ENCODE measurements at regions of chr3 and their contacts with region 1.

Region 1: DNA sequence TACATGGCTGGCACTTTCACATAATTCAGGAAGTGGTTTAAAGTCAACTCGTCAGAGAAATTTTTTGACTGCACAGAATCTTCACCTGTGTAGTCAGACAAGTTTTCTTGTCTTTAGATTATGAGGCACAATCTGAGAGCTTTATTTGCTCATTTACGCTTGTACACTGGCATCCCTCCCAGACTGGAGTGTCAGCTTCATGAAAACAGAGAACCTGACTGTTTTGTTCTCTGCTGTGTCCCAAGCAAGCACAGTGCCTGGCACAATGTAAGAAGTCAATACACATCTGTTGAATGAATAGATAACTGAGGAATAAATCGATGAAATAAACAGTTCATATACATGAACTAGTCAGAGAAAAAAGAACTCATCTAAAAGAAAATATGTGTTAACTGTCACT is 846.1 kb upstream of the CFAP20DC start:
- DNase-seq: no peak
- H3K4me3 ChIP-seq: no peak overlapping the region
- H3K27ac ChIP-seq: no peak overlapping the region
- H3K4me1 ChIP-seq: no peaks in the 10 kb centered on the region
- CTCF ChIP-seq: no peak

Region 2: GRCh38 chr3:59866076-59866475 is 29.9 kb before region 1 on chr3:
- CTCF ChIA-PET with region 1: no interaction called
- POLR2A ChIA-PET with region 1: no interaction called
- intact Hi-C with region 1: loop called (anchors 1 kb)
- DNase-seq: no peak
- H3K4me3 ChIP-seq: no peak overlapping the region
- H3K27ac ChIP-seq: no peak overlapping the region
- H3K4me1 ChIP-seq: no peaks in the 10 kb centered on the region
- CTCF ChIP-seq: no peak

Measured in OCI-LY7 (cell line).